Natural killer cell (primary cell): ENCODE measurements at regions of chr2 and their contacts with region 1.

Region 1: GRCh38 chr2:73985308-73986084 is 786 bp downstream of the TET3 start:
- DNase-seq: peak; percentile 54 to 79
- ATAC-seq: peak; percentile 52 to 60 (median 54)
- H3K4me3 ChIP-seq: peak overlapping the region; percentile 63
- H3K4me3 Mint-ChIP-seq: peak overlapping the region; percentile 89
- H3K27ac ChIP-seq: peak overlapping the region; percentile 69
- H3K27ac Mint-ChIP-seq: peak overlapping the region; percentile 34 to 84
- H3K4me1 ChIP-seq: peaks cover 58% of the 10 kb centered on the region
- H3K4me1 Mint-ChIP-seq: peaks cover 62 to 71% of the 10 kb centered on the region in 2 donors
- H3K27me3 ChIP-seq: peaks cover 1% of the 10 kb centered on the region
- H3K27me3 Mint-ChIP-seq: peaks cover 19 to 20% of the 10 kb centered on the region in 2 donors
- CTCF ChIP-seq: no peak

Region 2: DNA sequence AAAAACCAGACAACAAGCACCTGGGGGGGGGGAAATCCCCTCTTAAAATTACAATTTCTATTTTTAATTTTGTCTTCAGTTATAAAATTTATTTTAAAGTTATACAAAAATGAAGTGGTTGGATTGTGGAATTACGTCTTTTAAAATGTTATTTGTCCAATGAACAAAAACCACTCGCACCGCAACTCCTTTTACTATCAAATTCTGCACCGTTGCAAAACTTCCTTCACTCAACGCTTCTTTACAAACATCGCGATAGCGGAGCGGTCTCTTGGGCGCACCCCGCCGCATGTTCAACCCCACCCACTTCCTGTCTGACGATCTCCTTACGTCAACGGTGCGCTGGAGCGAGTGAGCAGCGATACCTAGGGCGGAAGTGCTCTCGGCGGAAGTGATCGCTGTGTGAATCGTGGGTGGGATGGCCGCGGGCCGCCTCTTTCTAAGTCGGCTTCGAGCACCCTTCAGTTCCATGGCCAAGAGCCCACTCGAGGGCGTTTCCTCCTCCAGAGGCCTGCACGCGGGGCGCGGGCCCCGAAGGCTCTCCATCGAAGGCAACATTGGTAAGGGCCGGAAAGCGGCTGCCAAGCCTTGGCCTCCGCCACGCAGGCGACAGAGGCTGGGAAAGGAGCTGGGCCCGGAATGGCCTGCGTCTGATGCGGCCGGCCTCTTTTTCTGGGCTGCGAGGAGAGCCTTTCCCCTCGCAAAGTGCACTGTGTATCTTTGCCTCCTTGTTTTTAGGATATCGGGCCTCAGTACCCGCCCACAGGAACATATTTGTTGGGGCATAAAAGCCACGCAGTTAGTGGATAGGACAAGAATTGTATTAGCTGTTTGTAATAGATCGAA is 58.8 kb before region 1 on chr2 and contains the start of gene DGUOK:
- intact Hi-C with region 1: loop called (anchors 2 kb)
- DNase-seq: peak; percentile 95 to 100
- ATAC-seq: peak; percentile 97 to 100 (median 98)
- H3K4me3 ChIP-seq: peak within 1 kb of the TSS; percentile 88
- H3K4me3 Mint-ChIP-seq: peak within 1 kb of the TSS; percentile 80
- H3K27ac ChIP-seq: peak within 1 kb of the TSS; percentile 99
- H3K27ac Mint-ChIP-seq: peak within 1 kb of the TSS; percentile 95 to 96
- H3K4me1 ChIP-seq: peaks cover 20% of the 10 kb centered on the region
- H3K4me1 Mint-ChIP-seq: peaks cover 34 to 43% of the 10 kb centered on the region in 2 donors
- H3K27me3 ChIP-seq: no peaks in the 10 kb centered on the region
- H3K27me3 Mint-ChIP-seq: no peaks in the 10 kb centered on the region
- CTCF ChIP-seq: no peak
- total RNA-seq, gene DGUOK: 47.6 to 56.8 (median 54.8) TPM

Region 3: DNA sequence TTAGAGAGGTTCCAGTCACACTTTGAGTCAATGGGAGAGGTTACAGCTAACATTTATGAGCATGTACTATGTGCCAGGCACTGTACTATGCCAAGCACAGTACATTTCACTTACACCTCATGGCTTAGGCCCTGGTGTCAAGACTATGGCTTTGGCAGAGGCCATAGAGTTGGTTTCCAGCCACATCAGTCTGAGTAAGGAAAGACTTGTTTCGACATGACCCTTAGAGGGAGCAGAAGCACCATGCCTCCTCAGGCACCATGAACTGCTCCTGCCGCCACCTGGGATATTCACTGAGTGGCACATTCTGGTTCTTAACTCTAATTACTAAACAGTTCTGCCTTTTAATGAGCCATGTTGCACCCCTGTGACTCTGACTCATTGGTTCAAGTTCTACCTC is 46.1 kb before region 1 on chr2:
- intact Hi-C with region 1: no loop called
- DNase-seq: peak in 1 of 2 donors; percentile 64
- ATAC-seq: peak in 2 of 3 donors; percentile 50 to 60
- H3K4me3 ChIP-seq: no peak overlapping the region
- H3K4me3 Mint-ChIP-seq: no peak overlapping the region
- H3K27ac ChIP-seq: no peak overlapping the region
- H3K27ac Mint-ChIP-seq: peak overlapping the region; percentile 19 to 23
- H3K4me1 ChIP-seq: peaks cover 3% of the 10 kb centered on the region
- H3K4me1 Mint-ChIP-seq: peaks cover 51% of the 10 kb centered on the region in 2 donors
- H3K27me3 ChIP-seq: no peaks in the 10 kb centered on the region
- H3K27me3 Mint-ChIP-seq: no peaks in the 10 kb centered on the region
- CTCF ChIP-seq: no peak

Region 4: GRCh38 chr2:73970850-73971471 is 14.5 kb before region 1 on chr2:
- intact Hi-C with region 1: loop called (anchors 2 kb)
- DNase-seq: peak; percentile 49 to 88
- ATAC-seq: peak; percentile 88 to 92 (median 90)
- H3K4me3 ChIP-seq: no peak overlapping the region
- H3K4me3 Mint-ChIP-seq: peak overlapping the region; percentile 86
- H3K27ac ChIP-seq: peak overlapping the region; percentile 73
- H3K27ac Mint-ChIP-seq: peak overlapping the region; percentile 90
- H3K4me1 ChIP-seq: peaks cover 37% of the 10 kb centered on the region
- H3K4me1 Mint-ChIP-seq: peaks cover 27 to 37% of the 10 kb centered on the region in 2 donors
- H3K27me3 ChIP-seq: no peaks in the 10 kb centered on the region
- H3K27me3 Mint-ChIP-seq: no peaks in the 10 kb centered on the region
- CTCF ChIP-seq: no peak

Region 5: DNA sequence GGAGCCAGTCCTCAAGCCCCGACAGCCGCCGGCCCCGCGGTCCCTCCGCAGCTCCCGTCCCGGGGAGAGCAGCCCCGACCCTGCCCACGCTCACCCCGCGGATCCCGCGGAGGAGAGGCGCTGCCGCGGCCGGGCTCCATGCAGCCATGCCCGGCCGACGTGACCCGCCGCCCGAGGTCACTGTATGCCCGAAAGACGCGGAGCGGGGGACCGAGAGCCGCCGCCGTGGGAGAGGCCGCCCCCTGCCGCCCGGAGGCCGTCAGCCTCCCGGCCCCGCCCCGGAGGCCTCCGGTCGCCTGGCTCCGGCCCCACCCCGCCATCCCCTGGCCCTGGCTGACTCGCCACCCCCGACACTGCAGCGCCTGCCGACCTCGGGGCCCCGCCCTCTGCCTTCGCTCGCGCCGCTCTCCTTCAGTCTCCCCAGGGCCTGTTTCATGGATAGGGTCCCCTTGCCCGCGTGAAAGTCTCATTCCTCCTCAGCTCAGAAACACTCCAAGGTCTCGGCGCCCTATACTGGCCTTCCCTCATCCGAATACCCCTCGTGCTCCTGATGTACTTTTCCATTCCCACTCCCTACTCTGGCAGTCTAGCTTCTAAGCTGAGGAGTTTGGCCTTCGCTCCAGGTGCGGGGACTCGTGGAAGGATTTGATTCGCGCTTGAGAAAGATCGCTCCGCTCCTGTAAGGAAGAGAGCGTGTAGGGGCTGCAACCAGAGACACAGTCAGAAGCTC is 162.4 kb after region 1 on chr2 and contains the start of gene BOLA3:
- intact Hi-C with region 1: loop called (anchors 10 kb)
- DNase-seq: peak; percentile 82 to 86
- ATAC-seq: peak; percentile 94 to 97 (median 95)
- H3K4me3 ChIP-seq: peak within 1 kb of the TSS; percentile 52
- H3K4me3 Mint-ChIP-seq: no peak within 1 kb of the TSS
- H3K27ac ChIP-seq: peak within 1 kb of the TSS; percentile 39
- H3K27ac Mint-ChIP-seq: no peak within 1 kb of the TSS
- H3K4me1 ChIP-seq: peaks cover 22% of the 10 kb centered on the region
- H3K4me1 Mint-ChIP-seq: no peaks in the 10 kb centered on the region
- H3K27me3 ChIP-seq: no peaks in the 10 kb centered on the region
- H3K27me3 Mint-ChIP-seq: no peaks in the 10 kb centered on the region
- CTCF ChIP-seq: peak; percentile 86
- total RNA-seq, gene BOLA3: 8.1 to 13.8 (median 11.9) TPM